ENCODE measurements at regions of chr5 and their contacts with region 1.

Region 1: DNA sequence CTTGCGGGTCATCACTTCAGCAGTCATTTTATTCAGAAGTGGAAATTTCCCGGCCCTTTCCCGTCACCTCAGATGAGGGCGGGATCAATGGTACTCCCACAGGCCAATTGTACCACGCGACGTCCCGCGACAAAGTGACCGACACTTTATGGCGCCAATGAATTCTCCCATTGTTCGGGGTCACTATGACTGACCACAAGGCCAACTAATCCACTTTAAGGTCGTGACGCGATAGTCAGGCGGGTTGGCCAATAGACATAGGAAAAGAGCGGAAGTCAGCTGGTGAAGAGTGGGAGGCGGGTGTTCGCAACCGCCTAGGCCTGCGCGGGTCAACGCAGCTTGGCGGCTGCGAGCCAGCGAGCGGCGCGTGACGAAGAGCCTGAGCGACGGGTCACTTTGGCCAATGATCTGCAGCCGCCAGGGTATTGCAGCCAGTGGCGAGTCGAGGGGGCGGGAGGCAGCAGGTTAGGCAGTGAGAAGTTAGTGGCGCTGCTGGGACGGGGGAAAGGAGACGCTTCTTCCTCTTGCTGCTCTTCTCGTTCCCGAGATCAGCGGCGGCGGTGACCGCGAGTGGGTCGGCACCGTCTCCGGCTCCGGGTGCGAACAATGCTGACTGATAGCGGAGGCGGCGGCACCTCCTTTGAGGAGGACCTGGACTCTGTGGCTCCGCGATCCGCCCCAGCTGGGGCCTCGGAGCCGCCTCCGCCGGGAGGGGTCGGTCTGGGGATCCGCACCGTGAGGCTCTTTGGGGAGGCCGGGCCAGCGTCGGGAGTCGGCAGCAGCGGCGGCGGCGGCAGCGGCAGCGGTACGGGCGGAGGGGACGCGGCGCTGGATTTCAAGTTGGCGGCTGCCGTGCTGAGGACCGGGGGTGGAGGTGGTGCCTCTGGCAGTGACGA is at the start of gene ANKHD1:
- DNase-seq: peak; percentile 96
- H3K4me3 Mint-ChIP-seq: no peak within 1 kb of the TSS
- H3K27ac Mint-ChIP-seq: peak within 1 kb of the TSS; percentile 88
- H3K4me1 Mint-ChIP-seq: peaks cover 24% of the 10 kb centered on the region
- H3K27me3 Mint-ChIP-seq: no peaks in the 10 kb centered on the region
- total RNA-seq, gene ANKHD1: 121 and 123 TPM in 2 replicates

Region 2: GRCh38 chr5:140107312-140108083 is 294.1 kb before region 1 on chr5:
- intact Hi-C with region 1: loop called (anchors 2 kb)
- DNase-seq: peak; percentile 90
- H3K4me3 Mint-ChIP-seq: peak overlapping the region; percentile 90
- H3K27ac Mint-ChIP-seq: peak overlapping the region; percentile 93
- H3K4me1 Mint-ChIP-seq: peaks cover 41% of the 10 kb centered on the region
- H3K27me3 Mint-ChIP-seq: peaks cover 60% of the 10 kb centered on the region

Region 3: GRCh38 chr5:140302786-140303639 is 98.6 kb before region 1 on chr5 and contains the start of gene PFDN1:
- intact Hi-C with region 1: loop called (anchors 1 kb)
- DNase-seq: peak; percentile 90
- H3K4me3 Mint-ChIP-seq: peak within 1 kb of the TSS; percentile 93
- H3K27ac Mint-ChIP-seq: peak within 1 kb of the TSS; percentile 93
- H3K4me1 Mint-ChIP-seq: peaks cover 38% of the 10 kb centered on the region
- H3K27me3 Mint-ChIP-seq: no peaks in the 10 kb centered on the region
- total RNA-seq, gene PFDN1: 59.5 and 60.6 TPM in 2 replicates

Region 4: GRCh38 chr5:140391312-140391711 is 10.3 kb before region 1 on chr5:
- intact Hi-C with region 1: no loop called
- DNase-seq: no peak
- H3K4me3 Mint-ChIP-seq: no peak overlapping the region
- H3K27ac Mint-ChIP-seq: no peak overlapping the region
- H3K4me1 Mint-ChIP-seq: no peaks in the 10 kb centered on the region
- H3K27me3 Mint-ChIP-seq: no peaks in the 10 kb centered on the region

Region 5: DNA sequence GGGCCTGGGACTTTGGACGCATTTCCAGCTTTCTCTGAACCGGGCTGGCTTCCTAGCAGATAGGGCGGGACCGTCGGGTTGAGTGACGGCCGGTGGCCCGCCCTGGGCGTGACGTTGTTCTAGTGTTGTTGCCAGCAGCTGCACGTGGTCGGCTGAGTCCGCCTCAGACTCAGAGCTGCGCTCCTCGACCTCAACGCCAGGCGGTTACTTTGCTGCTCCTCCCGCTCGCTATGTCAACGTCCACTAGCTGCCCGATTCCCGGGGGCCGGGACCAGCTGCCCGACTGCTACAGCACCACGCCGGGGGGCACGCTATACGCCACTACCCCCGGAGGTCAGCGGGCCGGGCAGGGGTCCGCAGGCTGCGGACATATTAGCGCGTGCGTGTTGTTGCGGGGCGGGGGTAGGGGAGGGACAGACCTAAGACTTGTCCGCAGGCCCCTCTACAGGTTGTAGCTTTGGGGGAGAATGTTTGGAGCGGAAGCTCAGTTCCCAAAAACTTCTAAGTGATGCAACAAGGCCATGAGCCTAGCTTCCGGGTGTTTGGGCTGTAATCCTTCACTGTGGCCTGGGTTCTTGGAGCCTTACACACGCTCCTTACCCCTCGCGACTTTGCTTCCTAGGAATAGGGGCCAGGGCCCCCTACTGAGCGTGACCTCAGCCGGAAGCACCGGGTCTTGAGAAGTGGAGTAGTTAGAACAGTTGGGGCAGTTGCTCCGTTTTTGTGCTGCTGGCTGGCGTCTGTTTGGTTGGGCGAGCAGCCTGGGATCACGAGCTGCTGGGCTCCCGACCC is 146.1 kb after region 1 on chr5 and contains the start of gene EIF4EBP3:
- intact Hi-C with region 1: loop called (anchors 1 kb)
- DNase-seq: peak; percentile 81
- H3K4me3 Mint-ChIP-seq: peak within 1 kb of the TSS; percentile 80
- H3K27ac Mint-ChIP-seq: peak within 1 kb of the TSS; percentile 82
- H3K4me1 Mint-ChIP-seq: peaks cover 48% of the 10 kb centered on the region
- H3K27me3 Mint-ChIP-seq: no peaks in the 10 kb centered on the region
- total RNA-seq, gene EIF4EBP3: 12.7 and 16.1 TPM in 2 replicates

Region 6: DNA sequence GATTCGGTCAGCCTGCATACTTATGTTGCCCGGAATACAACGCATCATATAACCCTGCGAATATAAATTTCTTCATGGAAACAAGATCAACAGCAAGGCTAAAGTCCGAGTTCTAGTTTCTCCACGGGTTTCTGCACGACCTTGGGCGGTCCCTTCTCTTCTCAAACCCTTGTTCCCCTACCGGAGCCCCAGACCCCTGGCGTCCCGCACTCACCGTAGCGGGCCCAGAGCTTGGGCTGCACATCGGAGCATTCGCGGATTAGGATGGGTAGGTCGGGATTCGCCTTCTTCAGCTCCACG is 245.4 kb after region 1 on chr5:
- intact Hi-C with region 1: loop called (anchors 1 kb)
- DNase-seq: no peak
- H3K4me3 Mint-ChIP-seq: peak overlapping the region; percentile 99
- H3K27ac Mint-ChIP-seq: peak overlapping the region; percentile 67
- H3K4me1 Mint-ChIP-seq: peaks cover 38% of the 10 kb centered on the region
- H3K27me3 Mint-ChIP-seq: no peaks in the 10 kb centered on the region

Region 7: DNA sequence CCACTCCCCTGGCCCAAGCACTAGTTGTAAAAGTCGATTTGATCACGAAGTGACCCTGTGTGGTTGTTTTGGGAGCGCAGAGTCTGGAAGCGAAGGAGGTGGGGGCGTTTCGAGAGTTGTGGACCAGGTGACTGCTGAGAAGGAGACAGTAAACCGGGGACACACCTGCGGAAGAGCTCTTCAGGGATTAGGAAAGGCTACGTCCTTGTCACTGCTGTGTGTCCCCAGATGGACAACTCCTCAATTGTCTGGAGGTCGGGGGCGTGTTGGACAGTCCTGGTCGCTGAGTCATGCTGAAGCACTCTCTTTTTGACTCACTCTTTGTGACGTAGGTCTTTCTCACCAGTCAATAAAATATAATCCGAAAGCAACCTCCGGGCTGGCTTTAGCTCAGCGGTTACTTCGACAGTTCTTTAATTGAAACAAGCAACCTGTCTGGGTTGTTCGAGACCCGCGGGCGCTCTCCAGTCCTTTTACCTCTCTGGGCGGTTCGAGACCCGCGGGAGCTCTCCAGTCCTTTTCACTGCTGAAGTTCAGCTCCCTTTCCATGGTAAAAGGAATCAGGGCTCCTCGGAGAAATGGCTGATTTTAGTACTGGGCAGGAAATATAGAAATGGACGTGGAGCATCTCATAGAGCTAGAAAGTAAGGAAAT is 309.4 kb after region 1 on chr5:
- intact Hi-C with region 1: loop called (anchors 1 kb)
- DNase-seq: peak; percentile 87
- H3K4me3 Mint-ChIP-seq: peak overlapping the region; percentile 91
- H3K27ac Mint-ChIP-seq: peak overlapping the region; percentile 94
- H3K4me1 Mint-ChIP-seq: peaks cover 22% of the 10 kb centered on the region
- H3K27me3 Mint-ChIP-seq: peaks cover 8% of the 10 kb centered on the region